ENCODE measurements at regions of chr3 and their contacts with region 1.

Region 1: DNA sequence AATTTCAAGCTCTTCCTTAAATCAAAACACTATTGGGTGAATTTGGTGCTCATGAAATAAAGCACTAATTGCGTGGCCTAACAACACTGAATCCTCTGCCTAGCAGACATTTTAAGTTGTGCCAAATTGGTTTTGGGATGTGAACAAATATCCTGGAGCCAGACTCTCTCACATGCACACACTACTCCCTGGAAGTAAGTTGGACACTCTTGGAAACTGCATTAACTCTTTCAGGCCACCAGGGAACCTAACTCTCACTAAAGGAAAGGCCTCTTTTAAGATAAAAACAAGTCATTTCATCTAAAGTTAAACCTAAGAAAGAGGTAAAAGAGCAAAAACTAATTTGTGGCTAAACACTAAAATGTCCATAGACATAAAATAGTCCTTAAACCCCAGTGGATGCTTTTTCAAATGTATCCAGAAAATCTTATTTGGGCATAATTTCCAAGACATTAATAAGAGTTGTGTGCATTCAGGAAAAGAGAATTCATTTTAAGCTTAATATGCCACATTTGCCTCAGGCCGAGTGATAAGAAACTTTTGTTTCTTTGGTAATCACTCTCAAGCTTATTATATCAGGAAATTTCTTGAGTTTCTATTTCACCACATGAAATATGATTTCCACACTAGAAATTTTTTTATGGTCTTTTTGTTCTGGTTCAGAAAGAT is 61.8 kb downstream of the ZBTB20 start:
- DNase-seq: no peak
- ATAC-seq: no peak
- H3K4me3 ChIP-seq: no peak overlapping the region
- H3K4me3 Mint-ChIP-seq: no peak overlapping the region
- H3K27ac ChIP-seq: no peak overlapping the region
- H3K27ac Mint-ChIP-seq: no peak overlapping the region
- H3K4me1 ChIP-seq: peaks cover 8% of the 10 kb centered on the region
- H3K4me1 Mint-ChIP-seq: peaks cover 55% of the 10 kb centered on the region
- H3K27me3 ChIP-seq: no peaks in the 10 kb centered on the region
- H3K27me3 Mint-ChIP-seq: no peaks in the 10 kb centered on the region
- CTCF ChIP-seq: no peak

Region 2: GRCh38 chr3:115019900-115020299 is 65.4 kb before region 1 on chr3:
- CTCF ChIA-PET with region 1: no interaction called
- POLR2A ChIA-PET with region 1: no interaction called
- intact Hi-C with region 1: no loop called
- DNase-seq: no peak
- ATAC-seq: no peak
- H3K4me3 ChIP-seq: no peak overlapping the region
- H3K4me3 Mint-ChIP-seq: no peak overlapping the region
- H3K27ac ChIP-seq: no peak overlapping the region
- H3K27ac Mint-ChIP-seq: no peak overlapping the region
- H3K4me1 ChIP-seq: no peaks in the 10 kb centered on the region
- H3K4me1 Mint-ChIP-seq: peaks cover 3% of the 10 kb centered on the region
- H3K27me3 ChIP-seq: no peaks in the 10 kb centered on the region
- H3K27me3 Mint-ChIP-seq: no peaks in the 10 kb centered on the region
- CTCF ChIP-seq: no peak

Region 3: GRCh38 chr3:115052906-115053305 is 32.4 kb before region 1 on chr3:
- CTCF ChIA-PET with region 1: no interaction called
- POLR2A ChIA-PET with region 1: no interaction called
- intact Hi-C with region 1: loop called in 1 of 2 experiments (anchors 5 kb)
- DNase-seq: no peak
- ATAC-seq: no peak
- H3K4me3 ChIP-seq: no peak overlapping the region
- H3K4me3 Mint-ChIP-seq: no peak overlapping the region
- H3K27ac ChIP-seq: no peak overlapping the region
- H3K27ac Mint-ChIP-seq: peak overlapping the region; percentile 64
- H3K4me1 ChIP-seq: no peaks in the 10 kb centered on the region
- H3K4me1 Mint-ChIP-seq: peaks cover 9% of the 10 kb centered on the region
- H3K27me3 ChIP-seq: no peaks in the 10 kb centered on the region
- H3K27me3 Mint-ChIP-seq: no peaks in the 10 kb centered on the region
- CTCF ChIP-seq: no peak